Lower lobe of right lung (tissue), 2 donors: ENCODE measurements at regions of chr2 and their contacts with region 1.

Region 1: GRCh38 chr2:38508311-38509039 is 94.3 kb downstream of the HNRNPLL start:
- DNase-seq: peak; percentile 89
- ATAC-seq: peak; percentile 80
- H3K4me3 ChIP-seq: no peak overlapping the region
- H3K27ac ChIP-seq: no peak overlapping the region
- H3K4me1 ChIP-seq: peaks cover 8% of the 10 kb centered on the region
- H3K27me3 ChIP-seq: no peaks in the 10 kb centered on the region
- CTCF ChIP-seq: peak; percentile 57

Region 2: DNA sequence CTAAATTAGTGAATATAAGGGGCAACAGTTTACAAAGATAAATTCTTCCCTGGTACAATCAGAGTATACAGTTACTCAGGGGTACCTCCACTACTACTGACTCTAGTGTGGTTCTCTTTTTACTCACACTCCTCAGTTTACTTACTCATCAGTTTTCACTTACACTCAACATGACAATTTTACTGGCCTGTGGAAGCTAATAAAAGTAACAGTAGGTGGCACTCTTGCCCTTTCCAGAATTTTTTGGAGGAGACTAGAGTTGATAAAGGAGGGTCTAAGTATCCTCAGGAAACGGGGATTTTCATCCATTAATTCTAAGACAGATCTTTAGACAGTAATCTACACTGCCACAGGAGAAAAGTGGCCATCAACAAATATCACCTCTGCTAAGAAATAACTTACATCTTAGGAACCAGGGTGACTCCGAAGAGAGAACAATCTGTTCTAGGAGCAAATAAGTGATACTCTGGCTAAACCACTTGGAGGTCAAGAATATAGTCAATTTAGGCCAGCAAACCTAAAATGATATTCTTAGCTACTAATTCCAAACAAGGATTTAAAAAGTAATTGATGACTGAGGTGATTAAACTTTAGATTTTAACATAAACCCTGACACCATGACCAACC is 192.7 kb before region 1 on chr2:
- intact Hi-C with region 1: loop called (anchors 10 kb)
- DNase-seq: no peak
- ATAC-seq: peak; percentile 66 to 75
- H3K4me3 ChIP-seq: no peak overlapping the region
- H3K27ac ChIP-seq: no peak overlapping the region
- H3K4me1 ChIP-seq: no peaks in the 10 kb centered on the region
- H3K27me3 ChIP-seq: no peaks in the 10 kb centered on the region
- CTCF ChIP-seq: peak; percentile 71

Region 3: DNA sequence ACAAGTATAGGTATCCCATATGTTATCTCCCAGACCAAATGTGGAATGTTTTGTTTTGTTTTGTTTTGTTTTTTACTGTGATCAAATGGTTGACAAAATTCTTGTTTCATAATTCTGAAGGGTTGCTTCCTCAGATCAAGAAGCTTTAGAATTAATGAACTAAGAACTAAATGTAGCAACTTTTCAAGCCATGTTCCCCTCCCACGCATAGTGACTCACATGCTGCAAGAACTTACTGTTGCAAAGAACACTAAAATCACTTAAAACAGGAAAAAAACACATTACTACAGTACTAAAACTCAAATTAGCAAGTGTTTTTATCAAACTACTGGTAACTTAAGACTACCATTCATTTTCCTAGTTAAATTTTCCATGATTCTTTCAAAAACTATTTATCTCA is 63.7 kb after region 1 on chr2:
- intact Hi-C with region 1: no loop called
- DNase-seq: no peak
- ATAC-seq: peak in 1 of 2 donors; percentile 53
- H3K4me3 ChIP-seq: no peak overlapping the region
- H3K27ac ChIP-seq: no peak overlapping the region
- H3K4me1 ChIP-seq: peaks cover 10% of the 10 kb centered on the region
- H3K27me3 ChIP-seq: no peaks in the 10 kb centered on the region
- CTCF ChIP-seq: no peak